CD8-positive, alpha-beta T cell (primary cell): ENCODE measurements at regions of chr3 and their contacts with region 1.

Region 1: DNA sequence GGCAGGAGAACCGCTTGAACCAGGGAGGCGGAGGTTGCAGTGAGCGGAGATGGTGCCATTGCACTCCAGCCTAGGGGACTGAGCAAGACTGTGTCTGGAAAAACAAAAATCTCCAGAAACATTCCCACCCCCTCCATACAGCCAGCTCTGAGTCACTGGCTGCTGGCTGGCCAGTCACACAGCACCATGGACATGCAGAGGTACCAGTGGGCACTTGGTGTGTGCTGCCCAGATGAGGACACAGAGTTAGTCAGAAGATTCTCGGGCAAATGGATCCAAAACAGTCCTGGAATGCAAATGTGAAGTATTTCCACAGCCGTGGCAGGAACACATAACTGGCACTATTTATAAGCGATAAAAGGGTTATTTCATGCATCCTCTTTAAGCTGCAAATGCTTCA is 44.6 kb downstream of the BDH1 start:
- DNase-seq: no peak
- ATAC-seq: no peak
- H3K4me3 ChIP-seq: no peak overlapping the region
- H3K4me3 Mint-ChIP-seq: no peak overlapping the region
- H3K27ac ChIP-seq: no peak overlapping the region
- H3K27ac Mint-ChIP-seq: no peak overlapping the region
- H3K4me1 ChIP-seq: peaks cover 3% of the 10 kb centered on the region
- H3K4me1 Mint-ChIP-seq: peaks cover 4% of the 10 kb centered on the region
- H3K27me3 ChIP-seq: peaks cover 0 to 2% of the 10 kb centered on the region in 2 experiments
- H3K27me3 Mint-ChIP-seq: no peaks in the 10 kb centered on the region
- CTCF ChIP-seq: no peak

Region 2: GRCh38 chr3:197224034-197224444 is 287.1 kb before region 1 on chr3:
- CTCF ChIA-PET with region 1: interaction called, 19 read pairs
- POLR2A ChIA-PET with region 1: no interaction called
- intact Hi-C with region 1: loop called (anchors 1 kb)
- DNase-seq: peak in 3 of 9 experiments; percentile 5 to 58 (median 45)
- ATAC-seq: peak; percentile 56
- H3K4me3 ChIP-seq: no peak overlapping the region
- H3K4me3 Mint-ChIP-seq: no peak overlapping the region
- H3K27ac ChIP-seq: no peak overlapping the region
- H3K27ac Mint-ChIP-seq: no peak overlapping the region
- H3K4me1 ChIP-seq: no peaks in the 10 kb centered on the region
- H3K4me1 Mint-ChIP-seq: peaks cover 52% of the 10 kb centered on the region
- H3K27me3 ChIP-seq: no peaks in the 10 kb centered on the region
- H3K27me3 Mint-ChIP-seq: no peaks in the 10 kb centered on the region
- CTCF ChIP-seq: peak; percentile 65

Region 3: DNA sequence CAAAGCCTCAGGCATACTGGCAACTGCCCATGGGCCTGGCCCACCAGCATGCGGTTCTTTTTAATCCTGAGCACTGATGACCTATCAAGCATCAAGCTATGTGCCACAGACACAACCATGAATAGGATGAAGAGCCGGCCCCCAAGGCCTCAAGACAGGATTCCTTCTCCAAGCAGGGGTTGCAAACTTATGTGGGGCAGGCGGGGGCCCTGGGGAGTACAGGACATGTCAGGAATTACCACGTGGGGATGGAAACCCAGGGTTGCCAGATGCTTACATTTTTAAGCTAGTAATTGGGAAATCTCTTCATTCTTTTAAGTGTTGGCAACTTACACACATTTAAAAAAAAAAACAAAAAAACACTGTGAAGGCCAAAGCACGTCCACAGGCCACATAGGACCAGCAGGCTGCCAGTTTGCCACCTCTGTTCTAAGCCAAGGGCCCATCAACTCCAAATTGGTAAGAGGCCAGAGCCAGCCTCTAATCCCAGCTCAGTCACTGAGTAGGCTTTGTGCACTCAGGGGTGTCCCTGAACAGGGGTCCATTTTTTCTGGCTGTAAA is 11.8 kb after region 1 on chr3:
- CTCF ChIA-PET with region 1: interaction called, 11 read pairs
- POLR2A ChIA-PET with region 1: no interaction called
- intact Hi-C with region 1: no loop called
- DNase-seq: no peak
- ATAC-seq: no peak
- H3K4me3 ChIP-seq: no peak overlapping the region
- H3K4me3 Mint-ChIP-seq: no peak overlapping the region
- H3K27ac ChIP-seq: no peak overlapping the region
- H3K27ac Mint-ChIP-seq: no peak overlapping the region
- H3K4me1 ChIP-seq: no peaks in the 10 kb centered on the region
- H3K4me1 Mint-ChIP-seq: peaks cover 3% of the 10 kb centered on the region
- H3K27me3 ChIP-seq: no peaks in the 10 kb centered on the region
- H3K27me3 Mint-ChIP-seq: no peaks in the 10 kb centered on the region
- CTCF ChIP-seq: no peak